ENCODE measurements at regions of chr1 and their contacts with region 1.

Region 1: DNA sequence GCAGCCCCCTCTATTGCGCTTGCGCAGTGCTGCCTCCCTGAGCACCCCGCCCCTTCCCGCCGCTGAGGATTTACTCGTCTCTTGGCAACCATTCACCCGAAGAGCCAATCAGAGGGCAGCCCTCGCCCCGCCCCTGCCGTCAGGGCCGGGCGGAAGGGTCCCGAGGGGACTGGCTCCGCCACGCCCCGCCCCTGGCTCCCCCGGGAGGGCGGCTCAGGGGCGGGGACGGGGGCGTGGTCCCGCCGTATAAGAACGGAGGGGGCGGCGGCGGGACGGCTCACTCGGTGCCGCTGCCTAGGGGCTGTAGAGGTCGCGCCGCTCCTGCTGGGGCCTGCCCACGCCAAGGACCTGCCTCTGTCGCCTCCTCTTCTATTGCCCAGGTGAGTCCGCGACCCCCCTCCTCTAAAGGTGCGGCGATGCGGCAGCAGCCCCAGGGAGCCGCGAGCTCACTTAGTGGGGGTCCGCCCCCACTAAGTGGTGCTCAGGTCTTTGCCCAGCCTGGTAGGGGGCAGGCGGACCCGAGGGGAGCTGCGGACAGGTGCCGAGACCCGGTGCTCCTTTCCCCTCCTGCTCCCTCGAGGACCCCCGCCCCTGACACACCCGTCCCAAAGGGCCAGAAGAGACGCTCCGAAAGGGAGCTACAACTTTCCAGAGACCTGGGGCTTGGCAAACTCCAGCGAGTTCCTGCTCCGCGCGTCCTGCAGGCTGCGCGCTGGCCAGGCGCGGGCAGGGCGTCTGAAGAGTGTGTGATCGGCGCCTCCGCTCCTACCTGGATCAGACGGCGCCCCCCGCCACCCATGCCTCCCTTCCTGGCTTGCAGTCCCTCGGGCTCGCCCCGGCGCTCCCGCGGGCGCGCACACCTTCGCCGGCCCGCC is at the start of gene TENT5C:
- DNase-seq: peak; percentile 87 to 99 (median 94)

Region 2: GRCh38 chr1:117929173-117929989 is 323.4 kb after region 1 on chr1 and contains the starts of genes GDAP2 and WDR3:
- intact Hi-C with region 1: loop called (anchors 10 kb)
- DNase-seq: peak; percentile 95 to 100 (median 98)

Measured in posterior cingulate gyrus (tissue), 11 donors.